ENCODE measurements at regions of chr19 and their contacts with region 1.

Region 1: DNA sequence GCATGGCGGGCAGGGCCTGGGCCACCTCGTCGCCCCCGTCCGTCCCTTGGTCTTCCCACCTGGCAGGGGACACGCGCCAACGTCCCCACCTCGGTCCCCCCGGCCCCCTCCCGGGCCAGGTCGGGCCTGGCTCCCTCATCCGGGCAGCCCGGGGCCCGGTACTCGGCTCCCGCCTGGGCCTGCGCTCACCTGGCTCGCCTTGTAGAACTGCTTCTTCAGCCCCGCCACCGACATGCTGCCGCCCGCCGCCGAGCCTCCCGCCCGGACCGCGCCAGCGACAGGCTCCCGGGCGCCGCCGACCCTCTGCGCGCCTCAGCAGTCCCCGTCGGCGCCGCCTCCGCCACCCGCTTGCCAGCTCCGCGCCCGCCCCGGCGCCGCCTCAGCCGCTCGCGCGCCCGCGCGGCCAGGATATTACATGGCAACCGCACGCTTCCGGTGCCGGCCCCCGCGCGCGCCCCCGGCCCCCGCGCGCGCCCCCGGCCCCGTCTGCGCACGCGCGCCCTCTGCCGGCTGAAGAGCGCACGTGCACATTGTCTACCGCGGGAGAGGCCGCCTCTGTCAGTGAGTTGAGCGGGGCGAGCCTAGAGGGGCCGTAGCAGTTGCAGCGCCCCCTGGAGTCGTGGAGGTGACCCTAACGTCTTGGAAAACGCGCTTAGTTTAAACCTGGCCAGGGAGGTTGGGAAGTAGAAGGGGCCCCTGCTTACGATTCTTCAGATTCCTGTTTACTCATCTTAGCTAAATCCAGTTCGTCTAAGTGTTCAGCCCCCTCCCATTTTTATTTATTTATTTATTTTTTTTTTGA is at the start of gene SH3GL1:
- DNase-seq: peak; percentile 92
- H3K4me3 Mint-ChIP-seq: peak within 1 kb of the TSS; percentile 94
- H3K27ac Mint-ChIP-seq: peak within 1 kb of the TSS; percentile 92
- H3K4me1 Mint-ChIP-seq: peaks cover 70% of the 10 kb centered on the region
- H3K27me3 Mint-ChIP-seq: no peaks in the 10 kb centered on the region
- total RNA-seq, gene SH3GL1: 67.7 to 68.2 TPM

Region 2: GRCh38 chr19:4342615-4343369 is 57.5 kb before region 1 on chr19:
- CTCF ChIA-PET with region 1: interaction called, 20 read pairs
- POLR2A ChIA-PET with region 1: no interaction called
- DNase-seq: peak; percentile 98
- H3K4me3 Mint-ChIP-seq: peak overlapping the region; percentile 91
- H3K27ac Mint-ChIP-seq: peak overlapping the region; percentile 97
- H3K4me1 Mint-ChIP-seq: peaks cover 38% of the 10 kb centered on the region
- H3K27me3 Mint-ChIP-seq: no peaks in the 10 kb centered on the region

Region 3: GRCh38 chr19:4375164-4376027 is 24.9 kb before region 1 on chr19:
- CTCF ChIA-PET with region 1: interaction called, 27 read pairs
- POLR2A ChIA-PET with region 1: interaction called, 3 read pairs
- DNase-seq: no peak
- H3K4me3 Mint-ChIP-seq: no peak overlapping the region
- H3K27ac Mint-ChIP-seq: peak overlapping the region; percentile 50
- H3K4me1 Mint-ChIP-seq: peaks cover 81% of the 10 kb centered on the region
- H3K27me3 Mint-ChIP-seq: no peaks in the 10 kb centered on the region

Region 4: DNA sequence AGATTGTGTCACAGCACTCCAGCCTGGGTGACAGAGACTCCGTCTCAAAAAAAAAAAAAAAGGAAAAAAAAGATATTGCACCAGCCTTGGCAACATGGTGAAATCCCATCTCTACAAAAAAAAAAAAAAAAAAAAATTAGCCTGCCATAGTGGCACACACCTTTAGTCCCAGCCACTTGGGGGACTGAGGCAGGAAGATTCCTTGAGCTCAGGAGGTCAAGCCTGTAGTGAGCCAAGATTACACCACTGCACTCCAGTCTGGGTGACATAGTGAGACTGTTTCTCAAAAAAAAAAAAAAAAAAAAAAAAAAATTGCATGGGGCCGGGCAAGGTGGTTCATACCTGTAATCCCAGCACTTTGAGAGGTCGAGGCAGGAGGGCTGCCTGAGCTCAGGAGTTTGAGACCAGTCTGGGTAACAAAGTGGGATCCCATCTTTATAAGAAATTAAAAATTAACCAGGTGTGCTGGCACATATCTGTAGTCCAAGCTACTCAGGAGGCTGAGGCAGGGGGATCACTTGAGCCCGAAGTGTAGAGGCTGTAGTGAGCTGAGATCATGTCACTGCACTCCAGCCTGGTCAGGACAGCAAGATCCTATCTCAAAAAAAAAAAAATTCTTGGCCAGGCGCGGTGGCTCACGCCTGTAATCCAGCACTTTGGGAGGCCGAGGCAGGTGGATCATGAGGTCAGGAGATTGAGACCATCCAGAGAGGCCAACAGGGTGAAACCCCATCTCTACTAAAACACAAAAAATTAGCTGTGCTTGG is 64.7 kb after region 1 on chr19:
- CTCF ChIA-PET with region 1: interaction called, 4 read pairs
- POLR2A ChIA-PET with region 1: interaction called, 10 read pairs
- DNase-seq: no peak
- H3K4me3 Mint-ChIP-seq: no peak overlapping the region
- H3K27ac Mint-ChIP-seq: no peak overlapping the region
- H3K4me1 Mint-ChIP-seq: no peaks in the 10 kb centered on the region
- H3K27me3 Mint-ChIP-seq: no peaks in the 10 kb centered on the region